Lower leg skin (tissue), 4 donors: ENCODE measurements at regions of chr10 and their contacts with region 1.

Region 1: DNA sequence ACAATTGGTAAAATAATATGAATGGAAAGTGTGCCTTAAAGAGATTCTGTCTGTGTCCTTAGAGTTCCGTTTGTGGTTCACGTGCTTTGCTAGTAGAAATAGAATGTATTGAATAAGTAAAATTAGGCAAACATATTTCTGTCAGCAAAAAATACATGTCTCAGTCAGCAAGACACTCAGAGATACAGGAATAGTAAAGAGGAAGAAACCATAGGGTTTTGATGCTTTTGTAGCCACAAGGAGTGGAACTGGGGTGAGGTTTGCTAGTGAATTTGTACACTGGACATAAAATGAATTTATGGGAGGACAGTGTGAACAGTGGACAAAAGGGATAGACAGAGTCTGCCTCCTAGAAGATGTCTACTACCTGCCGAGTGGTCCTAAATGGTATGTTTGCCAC is 289.2 kb upstream of the NRP1 start:
- DNase-seq: no peak
- H3K4me3 ChIP-seq: no peak overlapping the region
- CTCF ChIP-seq: no peak
- POLR2A ChIP-seq: no peak

Region 2: DNA sequence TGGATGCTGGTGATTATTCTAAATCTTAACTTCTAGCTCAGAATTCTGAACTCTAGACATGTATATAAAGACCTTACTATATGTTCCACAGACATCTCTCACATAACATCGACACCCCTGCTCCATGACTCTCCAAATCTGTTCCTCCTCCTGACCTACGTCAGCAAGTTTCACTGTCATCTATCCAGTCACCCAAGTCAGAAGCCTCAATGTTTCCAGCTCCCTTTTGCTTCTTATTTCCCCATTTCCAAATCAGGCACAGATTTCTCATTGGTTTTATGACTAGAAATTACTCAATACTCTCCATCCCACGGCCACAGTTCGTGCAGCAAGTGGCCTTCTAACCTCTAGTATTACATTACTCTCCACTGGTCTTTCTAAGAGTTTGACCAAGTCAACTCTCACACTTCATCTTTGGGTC is 1305.2 kb before region 1 on chr10:
- intact Hi-C with region 1: no loop called
- DNase-seq: peak in 1 of 2 donors; percentile 23
- H3K4me3 ChIP-seq: no peak overlapping the region
- CTCF ChIP-seq: no peak
- POLR2A ChIP-seq: no peak

Region 3: GRCh38 chr10:33237736-33238624 is 385.7 kb before region 1 on chr10:
- intact Hi-C with region 1: no loop called
- DNase-seq: no peak
- H3K4me3 ChIP-seq: no peak overlapping the region
- CTCF ChIP-seq: no peak
- POLR2A ChIP-seq: no peak

Region 4: GRCh38 chr10:33653584-33654367 is 30.1 kb after region 1 on chr10:
- intact Hi-C with region 1: loop called (anchors 2 kb)
- DNase-seq: no peak
- H3K4me3 ChIP-seq: no peak overlapping the region
- CTCF ChIP-seq: no peak
- POLR2A ChIP-seq: no peak